HepG2 (cell line): ENCODE measurements at regions of chr16 and their contacts with region 1.

Region 1: GRCh38 chr16:47141773-47142485 is 1.8 kb downstream of the NETO2 start:
- DNase-seq: peak; percentile 90
- ATAC-seq: peak; percentile 79
- H3K4me3 ChIP-seq: peak overlapping the region; percentile 64 to 75 (median 67)
- H3K27ac ChIP-seq: no peak overlapping the region
- H3K4me1 ChIP-seq: peaks cover 21% of the 10 kb centered on the region
- H3K27me3 ChIP-seq: peaks cover 1 to 26% of the 10 kb centered on the region in 2 experiments; a peak in 3 of 5 replicates
- CTCF ChIP-seq: peak; percentile 98
- EP300 ChIP-seq: no peak
- POLR2A ChIP-seq: no peak
- RAD21 ChIP-seq: peak; percentile 90

Region 2: DNA sequence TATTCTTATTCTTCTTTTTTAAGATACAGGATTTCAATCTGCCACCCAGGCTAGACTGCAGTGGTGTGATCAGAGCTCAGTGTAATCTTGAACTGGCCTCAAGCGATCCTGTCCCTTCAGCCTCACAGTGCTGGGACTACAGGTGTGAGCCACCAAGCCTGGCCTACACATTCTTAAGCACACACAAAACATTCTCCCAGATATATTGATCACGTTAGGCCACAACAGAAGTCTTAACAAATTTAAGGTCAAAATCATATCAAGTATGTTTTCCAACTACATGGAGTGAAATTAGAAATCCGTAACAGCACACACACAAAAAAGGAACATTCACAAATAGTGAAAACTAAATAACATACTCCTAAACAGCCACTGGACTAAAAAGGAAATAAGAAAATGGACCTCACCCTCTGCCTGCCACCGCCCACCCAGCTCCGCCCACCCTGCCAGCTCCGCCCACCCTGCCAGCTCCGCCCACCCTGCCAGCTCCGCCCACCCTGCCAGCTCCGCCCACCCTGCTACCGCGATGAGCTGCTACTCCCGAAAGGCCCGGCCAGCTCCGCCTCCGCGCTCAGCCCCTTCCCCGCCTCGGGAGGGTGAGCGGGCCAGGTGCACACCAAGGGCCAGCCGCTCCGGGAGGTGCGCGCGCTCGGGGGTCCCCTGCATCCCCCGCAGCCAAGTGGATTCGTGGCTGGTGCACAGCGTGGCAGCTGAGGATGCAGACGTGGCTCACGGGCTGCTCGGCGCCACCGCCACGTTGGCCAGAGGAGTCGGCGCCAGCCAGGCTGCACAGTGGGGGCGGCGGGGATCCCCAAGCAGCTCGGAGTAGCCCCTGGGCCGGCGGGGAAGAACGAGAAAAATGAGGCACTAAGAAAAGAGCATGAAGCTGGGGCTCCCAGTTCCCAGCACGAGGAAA is 352.2 kb before region 1 on chr16:
- CTCF ChIA-PET with region 1: no interaction called
- POLR2A ChIA-PET with region 1: no interaction called
- in situ Hi-C with region 1: no loop called
- intact Hi-C with region 1: no loop called
- DNase-seq: peak; percentile 74
- ATAC-seq: peak; percentile 96
- H3K4me3 ChIP-seq: peak overlapping the region; percentile 74 to 93 (median 90)
- H3K27ac ChIP-seq: peak overlapping the region; percentile 71
- H3K4me1 ChIP-seq: peaks cover 37% of the 10 kb centered on the region
- H3K27me3 ChIP-seq: no peaks in the 10 kb centered on the region
- CTCF ChIP-seq: peak; percentile 30
- EP300 ChIP-seq: no peak
- POLR2A ChIP-seq: peak; percentile 90 to 96
- RAD21 ChIP-seq: peak; percentile 83

Region 3: DNA sequence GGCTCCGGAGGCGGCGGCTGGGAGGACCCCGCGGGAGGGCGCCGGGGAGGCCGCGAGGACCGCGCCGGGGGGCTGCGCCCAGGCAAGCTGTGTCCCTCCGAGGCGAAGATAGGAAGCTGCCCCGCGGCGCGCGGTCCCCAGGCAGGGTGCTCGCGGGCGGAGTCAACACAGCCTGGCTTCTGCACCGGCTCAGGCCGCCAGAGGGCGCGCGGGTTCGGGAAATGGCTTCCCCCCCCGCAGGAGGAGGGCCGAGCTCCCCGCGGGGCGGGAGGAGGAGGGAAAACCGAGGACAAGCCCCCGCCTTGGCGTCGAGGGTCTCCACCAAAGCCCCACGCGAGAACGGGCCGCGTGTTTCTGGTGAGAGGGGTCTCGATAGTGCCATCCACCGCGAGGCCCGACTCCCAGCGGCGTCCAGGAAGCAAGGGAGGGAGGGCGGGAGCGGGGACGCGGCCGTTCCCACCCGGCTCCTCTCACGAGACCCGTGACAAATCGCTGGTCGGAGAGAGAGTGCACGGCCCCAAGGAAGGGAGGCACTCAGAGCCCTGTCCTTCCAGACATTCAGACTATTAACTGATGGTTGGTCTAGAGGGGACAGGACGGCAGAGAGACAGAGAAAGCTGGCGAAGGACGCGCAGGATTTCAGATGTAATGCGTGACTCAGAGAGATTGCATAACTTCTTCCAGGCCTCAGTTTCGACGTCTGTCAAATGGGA is 104.0 kb before region 1 on chr16:
- CTCF ChIA-PET with region 1: interaction called, 16 read pairs
- POLR2A ChIA-PET with region 1: no interaction called
- in situ Hi-C with region 1: loop called (anchors 5 kb)
- intact Hi-C with region 1: loop called (anchors 1 kb)
- DNase-seq: peak; percentile 61
- ATAC-seq: peak; percentile 96
- H3K4me3 ChIP-seq: peak overlapping the region; percentile 61 to 80 (median 80)
- H3K27ac ChIP-seq: no peak overlapping the region
- H3K4me1 ChIP-seq: peaks cover 30% of the 10 kb centered on the region
- H3K27me3 ChIP-seq: peaks cover 0 to 41% of the 10 kb centered on the region in 2 experiments; a peak in 4 of 5 replicates
- CTCF ChIP-seq: peak; percentile 98
- EP300 ChIP-seq: 0 out of 4 replicates have a peak, but pooled peaks of 1 of the 2 experiments have one; percentile 8
- POLR2A ChIP-seq: no peak
- RAD21 ChIP-seq: peak; percentile 96

Region 4: GRCh38 chr16:47460711-47461597 is 319.0 kb after region 1 on chr16 and contains the starts of genes ITFG1 and PHKB:
- CTCF ChIA-PET with region 1: no interaction called
- POLR2A ChIA-PET with region 1: no interaction called
- in situ Hi-C with region 1: no loop called
- intact Hi-C with region 1: loop called (anchors 5 kb)
- DNase-seq: peak; percentile 92
- ATAC-seq: peak; percentile 89
- H3K4me3 ChIP-seq: peak within 1 kb of the TSS; percentile 82 to 100 (median 99)
- H3K27ac ChIP-seq: peak within 1 kb of the TSS; percentile 99
- H3K4me1 ChIP-seq: peaks cover 65% of the 10 kb centered on the region
- H3K27me3 ChIP-seq: no peaks in the 10 kb centered on the region; a peak in 1 of 5 replicates
- CTCF ChIP-seq: peak; percentile 22; the same call in 1 of the 2 replicates
- EP300 ChIP-seq: peak in 1 of 2 experiments; percentile 68; a peak in 1 of 4 replicates
- POLR2A ChIP-seq: peak; percentile 80 to 86; a peak in 3 of 4 replicates
- RAD21 ChIP-seq: peak; percentile 78
- total RNA-seq, gene ITFG1: 43.7 and 74.5 TPM in 2 replicates
- total RNA-seq, gene PHKB: 66.0 and 95.1 TPM in 2 replicates

Region 5: GRCh38 chr16:48041861-48042480 is 900.0 kb after region 1 on chr16:
- CTCF ChIA-PET with region 1: interaction called, 3 read pairs
- POLR2A ChIA-PET with region 1: no interaction called
- in situ Hi-C with region 1: no loop called
- intact Hi-C with region 1: loop called (anchors 5 kb)
- DNase-seq: peak; percentile 34
- ATAC-seq: peak; percentile 94
- H3K4me3 ChIP-seq: no peak overlapping the region
- H3K27ac ChIP-seq: no peak overlapping the region
- H3K4me1 ChIP-seq: peaks cover 6% of the 10 kb centered on the region; the same call in 1 of the 2 replicates
- H3K27me3 ChIP-seq: peaks cover 0 to 1% of the 10 kb centered on the region in 2 experiments; a peak in 2 of 5 replicates
- CTCF ChIP-seq: peak; percentile 60
- EP300 ChIP-seq: no peak
- POLR2A ChIP-seq: no peak
- RAD21 ChIP-seq: peak; percentile 61

Region 6: DNA sequence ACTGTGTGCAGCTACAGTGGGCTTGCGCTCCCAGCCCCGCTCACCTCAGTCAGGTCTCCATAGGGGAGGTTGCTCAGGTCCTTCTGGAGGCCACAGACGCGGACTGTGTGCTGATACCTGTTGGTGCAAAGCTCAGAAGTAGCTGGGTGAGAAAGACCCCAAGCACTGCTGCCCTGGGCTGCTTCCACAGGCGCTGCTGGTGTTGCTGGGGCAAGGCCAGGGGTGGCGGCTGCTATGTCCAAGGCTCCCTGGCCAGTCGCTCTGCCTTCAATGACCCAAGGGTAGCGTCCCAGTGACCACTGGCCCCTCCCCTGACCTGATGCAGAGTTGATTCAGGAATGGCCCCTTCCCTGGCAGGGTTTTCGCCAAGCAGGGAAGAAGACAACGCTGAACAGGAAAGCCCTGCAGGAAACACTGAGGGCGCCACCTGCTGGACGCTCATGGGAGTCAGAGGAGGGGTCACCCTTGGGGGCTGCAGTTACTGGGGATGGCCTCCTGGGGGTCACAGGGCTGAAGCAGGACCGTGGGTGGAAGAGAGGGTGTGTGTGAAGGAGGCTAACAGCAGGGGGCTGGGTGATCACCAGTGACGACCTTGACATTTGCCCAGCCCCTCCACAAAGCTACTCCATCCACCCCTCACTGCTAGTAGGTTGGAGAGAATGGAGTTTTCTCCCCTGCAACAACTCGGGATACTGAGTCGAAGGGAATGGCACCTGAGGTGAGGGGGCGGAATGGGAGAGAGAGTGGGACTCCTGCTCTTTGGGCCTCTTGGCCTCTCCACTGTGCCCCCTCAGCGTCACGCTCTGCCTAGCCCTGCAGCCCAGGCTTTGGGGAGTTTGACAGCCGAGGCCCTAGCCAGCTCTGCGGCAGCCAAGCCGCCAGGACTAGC is 975.5 kb after region 1 on chr16:
- CTCF ChIA-PET with region 1: interaction called, 24 read pairs
- POLR2A ChIA-PET with region 1: no interaction called
- in situ Hi-C with region 1: loop called (anchors 5 kb)
- intact Hi-C with region 1: loop called (anchors 1 kb)
- DNase-seq: peak; percentile 81
- ATAC-seq: peak; percentile 95
- H3K4me3 ChIP-seq: no peak overlapping the region
- H3K27ac ChIP-seq: no peak overlapping the region
- H3K4me1 ChIP-seq: peaks cover 9% of the 10 kb centered on the region
- H3K27me3 ChIP-seq: peaks cover 0 to 36% of the 10 kb centered on the region in 2 experiments; a peak in 3 of 5 replicates
- CTCF ChIP-seq: peak; percentile 90
- EP300 ChIP-seq: no peak
- POLR2A ChIP-seq: no peak
- RAD21 ChIP-seq: peak; percentile 90

Region 7: DNA sequence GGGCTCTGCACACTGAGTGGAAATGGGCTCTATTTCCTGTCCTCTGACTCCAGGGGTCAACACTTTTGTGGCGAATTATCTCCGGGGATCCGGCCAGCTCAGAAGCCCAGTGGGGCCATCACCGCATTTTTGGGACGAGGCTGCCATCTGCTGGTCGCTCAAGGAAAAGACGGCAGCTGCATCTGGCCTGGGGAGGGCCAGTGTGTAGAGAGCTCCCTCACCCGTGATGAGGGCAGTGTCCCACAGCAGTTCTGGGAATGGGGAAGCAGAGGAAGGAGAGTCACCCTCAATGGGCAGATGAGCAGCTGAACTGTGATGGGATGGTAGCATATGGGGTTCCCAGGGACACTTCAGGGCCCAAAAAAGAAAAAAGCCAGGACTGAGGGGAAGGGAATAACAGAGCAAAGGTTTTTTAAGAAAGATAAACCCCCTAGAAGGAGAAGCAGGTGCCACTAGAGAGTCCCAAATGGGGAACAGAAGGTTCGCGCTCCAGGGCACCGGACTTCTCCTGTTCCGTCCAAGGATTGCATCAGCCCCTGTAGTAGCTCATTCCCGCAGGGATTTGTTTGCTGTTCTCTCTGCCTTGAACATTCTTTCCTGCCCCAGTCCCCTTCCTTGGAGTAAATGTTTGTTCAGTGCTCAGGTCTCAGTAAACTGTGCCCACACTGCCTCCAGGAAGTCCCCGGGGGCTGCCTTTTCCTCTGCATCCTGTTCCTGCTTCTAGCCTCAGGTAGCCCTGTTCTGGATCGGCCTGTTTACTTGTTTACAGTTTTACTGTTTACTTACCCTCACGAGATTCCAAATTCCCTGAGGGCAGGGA is 1023.2 kb after region 1 on chr16:
- CTCF ChIA-PET with region 1: interaction called, 21 read pairs
- POLR2A ChIA-PET with region 1: interaction called, 8 read pairs
- in situ Hi-C with region 1: loop called (anchors 5 kb)
- intact Hi-C with region 1: loop called (anchors 1 kb)
- DNase-seq: peak; percentile 82
- ATAC-seq: peak; percentile 89
- H3K4me3 ChIP-seq: peak overlapping the region; percentile 48 to 68 (median 53)
- H3K27ac ChIP-seq: peak overlapping the region; percentile 48
- H3K4me1 ChIP-seq: peaks cover 36% of the 10 kb centered on the region
- H3K27me3 ChIP-seq: 0 out of 5 replicates have a peak, but pooled peaks cover 0 to 4% of the 10 kb centered on the region in 2 experiments
- CTCF ChIP-seq: peak; percentile 99
- EP300 ChIP-seq: peak; percentile 26 to 68; a peak in 2 of 4 replicates
- POLR2A ChIP-seq: peak in 1 of 2 experiments; percentile 23; a peak in 1 of 4 replicates
- RAD21 ChIP-seq: peak; percentile 96